ENCODE measurements at regions of chr17 and their contacts with region 1.

Region 1: DNA sequence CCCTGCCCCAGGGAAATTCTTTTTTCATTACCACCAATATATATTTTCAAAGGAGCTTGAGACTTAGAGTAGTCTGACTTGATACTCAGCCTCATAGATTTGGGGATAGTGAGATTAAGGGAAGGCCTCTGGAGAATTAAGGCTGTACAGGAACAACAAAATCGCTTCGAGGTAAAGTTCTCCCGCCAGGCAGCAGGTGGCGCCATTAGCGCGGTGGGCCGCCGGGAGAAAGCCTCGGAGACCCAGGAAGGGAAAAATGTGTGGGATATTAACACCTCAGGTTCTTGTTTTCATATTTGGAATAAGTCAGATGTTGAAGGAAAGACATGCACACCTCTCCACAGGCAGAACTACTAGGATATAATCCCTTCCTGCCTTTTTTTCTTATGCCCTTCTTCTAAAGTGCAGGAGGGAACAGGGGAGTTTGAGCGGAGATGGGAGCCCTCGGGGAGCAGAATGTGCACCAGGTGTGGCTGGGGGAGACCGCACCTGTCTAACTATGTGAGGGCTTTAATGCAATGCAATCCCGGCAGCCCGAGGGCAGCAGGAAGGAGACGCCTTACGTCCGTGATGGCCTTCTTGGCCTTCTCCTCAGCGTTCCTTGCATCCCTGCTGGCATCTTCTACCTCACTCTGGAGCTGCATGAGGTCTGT is 25.9 kb downstream of the MYH3 start:
- DNase-seq: peak in 1 of 2 experiments; percentile 35
- H3K4me3 ChIP-seq: no peak overlapping the region
- H3K4me3 Mint-ChIP-seq: no peak overlapping the region
- H3K27ac Mint-ChIP-seq: no peak overlapping the region
- H3K4me1 ChIP-seq: no peaks in the 10 kb centered on the region
- H3K4me1 Mint-ChIP-seq: no peaks in the 10 kb centered on the region
- H3K27me3 ChIP-seq: no peaks in the 10 kb centered on the region
- H3K27me3 Mint-ChIP-seq: no peaks in the 10 kb centered on the region
- CTCF ChIP-seq: peak; percentile 46 to 54

Region 2: DNA sequence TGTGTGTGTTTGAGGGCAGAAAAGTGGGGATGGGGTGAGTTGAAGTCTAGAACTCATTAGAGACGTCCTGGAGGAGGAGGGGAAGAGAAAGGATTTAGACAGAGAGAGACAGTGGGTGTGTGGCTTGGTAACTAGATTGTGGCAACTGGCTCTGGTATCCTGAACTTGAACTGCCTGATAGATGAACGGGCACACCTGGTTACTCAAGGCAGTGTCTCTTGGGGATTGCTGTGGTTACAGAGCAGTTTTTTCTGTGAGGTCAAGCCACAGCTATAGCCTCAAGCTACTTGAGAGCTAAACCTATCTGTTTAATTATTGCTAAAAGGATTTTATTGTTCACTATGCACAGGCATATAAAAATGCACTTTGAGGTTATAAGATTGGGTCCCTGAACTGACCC is 51.9 kb before region 1 on chr17:
- CTCF ChIA-PET with region 1: no interaction called
- POLR2A ChIA-PET with region 1: no interaction called
- intact Hi-C with region 1: no loop called
- DNase-seq: no peak
- H3K4me3 ChIP-seq: no peak overlapping the region
- H3K4me3 Mint-ChIP-seq: no peak overlapping the region
- H3K27ac Mint-ChIP-seq: no peak overlapping the region
- H3K4me1 ChIP-seq: no peaks in the 10 kb centered on the region
- H3K4me1 Mint-ChIP-seq: no peaks in the 10 kb centered on the region
- H3K27me3 ChIP-seq: no peaks in the 10 kb centered on the region
- H3K27me3 Mint-ChIP-seq: peaks cover 13% of the 10 kb centered on the region
- CTCF ChIP-seq: no peak

Region 3: GRCh38 chr17:10713318-10713717 is 82.1 kb after region 1 on chr17:
- CTCF ChIA-PET with region 1: no interaction called
- POLR2A ChIA-PET with region 1: no interaction called
- intact Hi-C with region 1: no loop called
- DNase-seq: no peak
- H3K4me3 ChIP-seq: no peak overlapping the region
- H3K4me3 Mint-ChIP-seq: no peak overlapping the region
- H3K27ac Mint-ChIP-seq: no peak overlapping the region
- H3K4me1 ChIP-seq: no peaks in the 10 kb centered on the region
- H3K4me1 Mint-ChIP-seq: no peaks in the 10 kb centered on the region
- H3K27me3 ChIP-seq: no peaks in the 10 kb centered on the region
- H3K27me3 Mint-ChIP-seq: no peaks in the 10 kb centered on the region
- CTCF ChIP-seq: no peak

Region 4: DNA sequence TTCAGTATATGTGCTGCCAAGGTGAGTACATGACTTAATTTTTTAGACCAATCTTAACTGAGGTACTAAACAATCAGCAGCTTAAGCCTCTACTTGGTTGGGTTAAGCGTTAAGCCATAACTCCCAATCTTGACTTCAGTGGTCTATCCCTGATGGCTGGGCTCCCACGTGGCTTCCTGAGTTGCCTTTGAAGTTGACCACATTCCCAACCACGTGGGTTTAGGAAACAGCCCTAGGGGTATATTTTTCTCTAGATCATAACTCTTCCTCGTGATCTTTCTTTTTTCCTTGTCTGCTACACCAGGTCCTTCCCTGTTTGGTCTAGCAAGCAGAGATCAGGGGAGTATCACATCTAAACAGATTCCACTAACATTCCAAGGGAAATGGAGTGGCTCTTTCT is 226.8 kb after region 1 on chr17:
- CTCF ChIA-PET with region 1: no interaction called
- POLR2A ChIA-PET with region 1: interaction called, 19 read pairs
- intact Hi-C with region 1: no loop called
- DNase-seq: no peak
- H3K4me3 ChIP-seq: no peak overlapping the region
- H3K4me3 Mint-ChIP-seq: no peak overlapping the region
- H3K27ac Mint-ChIP-seq: no peak overlapping the region
- H3K4me1 ChIP-seq: no peaks in the 10 kb centered on the region
- H3K4me1 Mint-ChIP-seq: no peaks in the 10 kb centered on the region
- H3K27me3 ChIP-seq: no peaks in the 10 kb centered on the region
- H3K27me3 Mint-ChIP-seq: no peaks in the 10 kb centered on the region
- CTCF ChIP-seq: no peak